ENCODE measurements at regions of chr11 and their contacts with region 1.

Region 1: DNA sequence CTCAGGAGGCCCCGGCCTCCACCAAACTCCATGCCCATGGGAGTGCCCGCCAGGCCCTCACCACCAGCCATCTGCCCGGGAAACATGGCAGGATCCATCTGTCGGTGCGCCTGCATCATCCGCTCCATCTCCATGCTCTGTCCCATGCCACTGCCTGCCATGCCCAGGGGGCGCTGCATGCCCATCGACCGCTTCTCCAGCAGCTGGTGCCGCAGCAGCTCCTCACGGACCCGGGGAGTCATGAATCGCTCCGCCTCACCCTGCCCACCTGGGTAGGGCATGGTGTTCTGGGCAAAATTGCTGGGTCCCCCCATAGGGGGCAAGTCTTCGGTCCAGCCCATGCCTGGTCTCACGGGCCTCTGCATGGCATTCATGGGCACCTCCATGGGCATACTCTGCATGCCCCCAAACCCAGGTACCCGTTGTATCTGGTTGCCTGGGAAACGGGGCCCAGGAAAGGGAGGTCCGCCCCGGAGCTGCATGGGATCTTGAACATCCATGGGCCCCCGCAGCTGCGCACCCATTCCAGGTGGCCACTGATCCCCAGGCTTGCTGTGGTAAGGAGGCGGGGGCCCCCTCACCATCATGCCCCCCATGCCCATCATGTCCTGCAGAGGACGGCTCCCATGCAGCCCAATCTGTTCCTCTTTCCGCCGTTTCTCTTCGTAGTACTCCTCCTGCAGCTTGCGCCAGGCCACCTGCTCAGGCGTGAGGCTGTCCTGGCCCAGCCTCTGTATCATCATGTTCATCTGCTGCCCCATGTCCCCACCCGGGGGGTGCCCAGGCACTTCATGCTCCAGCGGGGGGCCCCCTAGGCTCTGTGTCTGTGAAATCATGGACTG is 18.0 kb downstream of the CXCR5 start:
- DNase-seq: peak in 1 of 5 donors; percentile 27
- ATAC-seq: no peak
- H3K4me3 ChIP-seq: no peak overlapping the region
- H3K27ac ChIP-seq: no peak overlapping the region
- H3K4me1 ChIP-seq: peaks cover 0 to 14% (median 4%) of the 10 kb centered on the region in 12 donors
- H3K27me3 ChIP-seq: no peaks in the 10 kb centered on the region
- CTCF ChIP-seq: peak in 1 of 12 donors; percentile 9
- POLR2A ChIP-seq: no peak

Region 2: GRCh38 chr11:118939953-118940598 is 38.4 kb after region 1 on chr11:
- intact Hi-C with region 1: loop called in 1 of 10 experiments (anchors 5 kb)
- DNase-seq: peak in 1 of 5 donors; percentile 40
- ATAC-seq: peak in 2 of 4 donors; percentile 63 to 69
- H3K4me3 ChIP-seq: no peak overlapping the region
- H3K27ac ChIP-seq: no peak overlapping the region
- H3K4me1 ChIP-seq: peaks cover 0 to 11% (median 0%) of the 10 kb centered on the region in 12 donors
- H3K27me3 ChIP-seq: peaks cover 0 to 7% (median 0%) of the 10 kb centered on the region in 9 donors
- CTCF ChIP-seq: no peak
- POLR2A ChIP-seq: no peak